Activated naive CD8-positive, alpha-beta T cell treated with anti-CD3 and anti-CD28 coated beads, Interleukin-2, amount 10 ng/mL, durations not matched to agents 7 days and 5 days (primary cell): ENCODE measurements at regions of chr2 and their contacts with region 1.

Region 1: DNA sequence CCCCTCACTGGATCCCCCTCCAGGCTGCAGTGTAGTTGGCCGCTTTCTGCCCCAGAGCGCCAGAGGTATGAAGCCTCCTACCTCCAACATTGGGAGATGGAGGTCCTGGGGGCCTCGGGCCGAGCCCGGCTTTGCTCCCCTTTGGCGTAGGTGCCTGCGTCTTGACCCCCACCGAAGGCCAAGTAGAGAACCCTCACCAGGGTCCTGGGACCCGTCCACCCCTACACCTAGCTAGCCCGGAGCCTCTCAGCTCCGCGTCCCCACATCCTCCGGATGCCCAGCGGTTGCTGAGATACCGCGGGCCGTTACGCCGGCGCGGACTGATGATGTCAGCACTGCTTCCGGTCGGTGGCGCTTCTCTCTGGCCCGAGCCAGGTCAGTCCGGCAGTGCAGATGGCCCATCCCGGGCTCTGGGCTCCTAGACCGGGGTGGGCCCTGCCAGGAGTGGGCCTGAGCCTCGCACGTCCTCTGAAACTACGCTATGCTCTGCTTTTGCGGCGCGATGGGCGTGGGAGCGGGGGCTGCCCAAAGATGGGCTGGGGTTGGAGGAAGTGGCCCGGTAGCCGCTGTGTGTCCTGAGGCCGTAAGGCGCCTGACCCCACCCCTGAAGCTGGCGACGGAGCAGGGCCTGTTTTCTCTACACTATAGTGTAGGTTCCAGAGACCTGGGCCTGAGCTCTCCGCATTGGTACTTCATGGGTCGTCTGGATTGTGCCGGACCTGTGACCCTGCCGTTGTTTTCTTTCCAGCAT is at the starts of genes GLB1L and STK16:
- DNase-seq: peak; percentile 96
- ATAC-seq: peak; percentile 64
- H3K4me3 Mint-ChIP-seq: peak within 1 kb of the TSS; percentile 99
- H3K27ac Mint-ChIP-seq: peak within 1 kb of the TSS; percentile 90
- H3K4me1 Mint-ChIP-seq: peaks cover 60% of the 10 kb centered on the region
- H3K27me3 Mint-ChIP-seq: no peaks in the 10 kb centered on the region
- total RNA-seq, gene GLB1L: 3.3 to 4.1 TPM
- total RNA-seq, gene STK16: 34.0 to 36.0 TPM

Region 2: DNA sequence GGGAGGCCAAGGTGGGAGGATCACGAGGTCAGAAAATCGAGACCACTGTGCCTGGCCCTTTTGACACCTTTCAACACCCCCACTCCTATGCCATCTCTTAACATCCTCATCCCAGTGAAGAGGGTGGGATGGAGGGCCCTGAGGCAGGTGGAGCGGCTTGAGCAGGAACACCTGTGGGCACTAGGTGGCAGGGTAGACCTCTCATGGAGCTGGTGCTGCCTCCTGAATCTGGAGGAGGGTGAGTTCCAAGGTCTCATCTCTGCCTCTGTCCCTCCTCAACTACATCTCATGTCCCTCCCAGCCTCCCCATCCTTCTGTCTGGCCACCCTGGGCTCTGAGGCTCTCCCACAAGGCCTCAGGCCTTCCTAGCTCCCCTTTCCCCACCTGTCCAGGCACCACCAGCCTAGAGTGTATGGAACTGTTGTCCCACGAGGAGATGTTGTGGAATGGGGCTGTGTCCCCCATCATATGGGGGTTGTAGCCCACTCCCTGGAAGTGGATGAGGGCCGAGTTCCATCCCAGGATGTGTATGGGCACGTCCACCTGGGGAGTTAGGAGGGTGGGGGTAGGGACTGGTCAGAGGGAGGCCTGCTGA is 235.1 kb before region 1 on chr2:
- POLR2A ChIA-PET with region 1: no interaction called
- DNase-seq: no peak
- ATAC-seq: peak; percentile 45
- H3K4me3 Mint-ChIP-seq: no peak overlapping the region
- H3K27ac Mint-ChIP-seq: no peak overlapping the region
- H3K4me1 Mint-ChIP-seq: no peaks in the 10 kb centered on the region
- H3K27me3 Mint-ChIP-seq: peaks cover 25% of the 10 kb centered on the region

Region 3: GRCh38 chr2:219206442-219207253 is 38.7 kb before region 1 on chr2 and contains the start of gene ZFAND2B:
- POLR2A ChIA-PET with region 1: interaction called, 14 read pairs
- DNase-seq: peak; percentile 99
- ATAC-seq: peak; percentile 97
- H3K4me3 Mint-ChIP-seq: peak within 1 kb of the TSS; percentile 85
- H3K27ac Mint-ChIP-seq: peak within 1 kb of the TSS; percentile 93
- H3K4me1 Mint-ChIP-seq: peaks cover 47% of the 10 kb centered on the region
- H3K27me3 Mint-ChIP-seq: no peaks in the 10 kb centered on the region
- total RNA-seq, gene ZFAND2B: 68.1 to 69.8 TPM

Region 4: DNA sequence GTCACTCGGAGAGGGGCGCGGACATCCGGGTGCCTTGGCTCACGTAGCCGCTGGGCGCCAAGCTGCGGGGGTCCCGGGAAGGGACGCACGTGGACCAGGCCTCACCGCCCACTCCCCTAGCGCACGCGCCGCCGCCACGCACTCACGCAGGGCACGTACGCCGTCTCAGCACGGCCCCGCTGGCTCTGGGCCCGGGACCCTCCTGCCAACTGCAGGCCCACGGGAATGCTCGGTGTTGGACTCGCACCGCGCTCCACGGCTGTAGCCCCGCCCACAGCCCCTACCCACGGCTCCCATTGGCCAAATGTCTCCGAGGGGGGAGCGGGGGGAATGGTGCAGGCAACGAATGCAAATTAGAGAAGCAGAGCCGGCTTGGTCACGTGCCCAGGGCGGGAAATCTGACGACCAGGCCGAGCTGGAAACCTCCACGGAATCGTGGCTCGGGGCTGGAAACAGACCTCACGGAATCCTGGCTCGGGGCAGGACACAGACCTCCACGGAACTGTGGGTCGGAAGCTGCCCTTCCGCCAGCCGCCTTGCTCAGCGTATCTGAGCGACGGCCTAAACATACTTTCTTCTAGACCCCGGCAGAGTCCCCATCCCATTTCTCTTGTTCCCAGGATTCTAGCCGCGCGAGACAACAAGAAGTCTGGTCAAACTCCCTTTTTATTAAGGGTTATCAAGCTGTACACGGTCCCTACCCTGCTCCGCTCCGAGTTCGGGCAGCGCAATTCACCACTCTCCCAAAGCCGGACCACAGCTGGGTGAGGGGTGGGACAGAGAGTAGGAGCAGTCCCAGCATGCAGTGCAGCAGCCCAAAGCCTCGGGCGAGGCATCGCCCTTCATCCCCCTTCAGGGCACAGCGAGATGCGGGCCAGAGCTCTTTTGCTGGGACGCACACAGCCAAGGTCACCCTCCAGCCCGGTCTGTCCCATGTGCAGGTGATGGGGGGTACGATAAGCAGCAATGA is 26.3 kb before region 1 on chr2 and contains the start of gene ABCB6:
- POLR2A ChIA-PET with region 1: interaction called, 15 read pairs
- DNase-seq: peak; percentile 82
- ATAC-seq: peak; percentile 86
- H3K4me3 Mint-ChIP-seq: peak within 1 kb of the TSS; percentile 82
- H3K27ac Mint-ChIP-seq: peak within 1 kb of the TSS; percentile 65
- H3K4me1 Mint-ChIP-seq: peaks cover 15% of the 10 kb centered on the region
- H3K27me3 Mint-ChIP-seq: no peaks in the 10 kb centered on the region
- total RNA-seq, gene ABCB6: 13.1 to 14.3 TPM

Region 5: DNA sequence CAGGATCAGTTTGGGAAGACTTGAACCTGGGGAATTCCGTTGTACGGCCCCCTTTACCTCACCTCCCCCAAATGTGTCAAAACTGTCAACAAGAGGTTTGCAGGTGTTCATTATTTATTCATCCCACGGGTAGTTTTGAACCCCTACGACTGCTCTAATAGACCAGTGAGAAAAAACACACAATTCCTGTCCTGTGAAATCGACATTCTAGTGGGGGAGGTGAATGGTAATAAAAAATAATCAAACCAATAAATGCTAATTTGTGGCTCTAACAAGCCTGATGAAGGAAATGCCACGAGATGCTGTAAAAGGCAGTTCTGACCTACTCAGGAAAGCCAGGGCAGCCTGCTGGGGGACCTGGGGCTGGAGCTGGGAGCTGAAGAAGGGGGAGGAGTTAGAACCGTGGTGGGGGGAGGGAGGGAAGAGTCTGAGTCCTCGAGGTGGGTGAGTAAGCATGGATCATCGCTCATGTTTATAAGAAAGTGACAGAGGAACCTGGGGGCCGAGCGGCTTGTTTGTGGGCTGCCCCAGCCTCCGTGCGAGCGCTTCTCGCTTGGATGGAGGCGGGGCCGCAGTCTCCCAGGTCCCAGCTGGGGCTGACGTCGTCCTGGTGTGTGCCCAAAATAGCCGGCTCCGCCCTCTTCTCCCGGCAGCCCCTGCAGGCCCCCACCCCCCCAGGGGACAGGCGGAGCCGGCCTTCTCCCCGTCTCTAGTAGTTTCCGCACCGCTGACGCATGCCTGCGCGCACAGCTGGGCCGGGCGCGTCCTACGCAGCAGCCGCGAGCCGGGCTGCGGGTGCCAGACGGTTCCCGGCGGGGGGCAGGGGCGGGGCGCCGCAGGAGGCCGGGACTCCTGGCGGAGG is 33.6 kb after region 1 on chr2 and contains the start of gene DNAJB2:
- POLR2A ChIA-PET with region 1: interaction called, 27 read pairs
- DNase-seq: peak; percentile 97
- ATAC-seq: peak; percentile 91
- H3K4me3 Mint-ChIP-seq: peak within 1 kb of the TSS; percentile 98
- H3K27ac Mint-ChIP-seq: peak within 1 kb of the TSS; percentile 99
- H3K4me1 Mint-ChIP-seq: peaks cover 38% of the 10 kb centered on the region
- H3K27me3 Mint-ChIP-seq: peaks cover 4% of the 10 kb centered on the region
- total RNA-seq, gene DNAJB2: 65.9 to 67.5 TPM